ENCODE measurements at regions of chr16 and their contacts with region 1.

Region 1: GRCh38 chr16:87387942-87388817 is 4.0 kb upstream of the MAP1LC3B start:
- DNase-seq: peak; percentile 87 to 99
- H3K4me3 ChIP-seq: peak overlapping the region; percentile 45; the same call in 1 of the 2 replicates
- H3K27ac ChIP-seq: peak overlapping the region; percentile 83
- H3K4me1 ChIP-seq: peaks cover 34% of the 10 kb centered on the region
- H3K27me3 ChIP-seq: no peaks in the 10 kb centered on the region
- CTCF ChIP-seq: no peak

Region 2: DNA sequence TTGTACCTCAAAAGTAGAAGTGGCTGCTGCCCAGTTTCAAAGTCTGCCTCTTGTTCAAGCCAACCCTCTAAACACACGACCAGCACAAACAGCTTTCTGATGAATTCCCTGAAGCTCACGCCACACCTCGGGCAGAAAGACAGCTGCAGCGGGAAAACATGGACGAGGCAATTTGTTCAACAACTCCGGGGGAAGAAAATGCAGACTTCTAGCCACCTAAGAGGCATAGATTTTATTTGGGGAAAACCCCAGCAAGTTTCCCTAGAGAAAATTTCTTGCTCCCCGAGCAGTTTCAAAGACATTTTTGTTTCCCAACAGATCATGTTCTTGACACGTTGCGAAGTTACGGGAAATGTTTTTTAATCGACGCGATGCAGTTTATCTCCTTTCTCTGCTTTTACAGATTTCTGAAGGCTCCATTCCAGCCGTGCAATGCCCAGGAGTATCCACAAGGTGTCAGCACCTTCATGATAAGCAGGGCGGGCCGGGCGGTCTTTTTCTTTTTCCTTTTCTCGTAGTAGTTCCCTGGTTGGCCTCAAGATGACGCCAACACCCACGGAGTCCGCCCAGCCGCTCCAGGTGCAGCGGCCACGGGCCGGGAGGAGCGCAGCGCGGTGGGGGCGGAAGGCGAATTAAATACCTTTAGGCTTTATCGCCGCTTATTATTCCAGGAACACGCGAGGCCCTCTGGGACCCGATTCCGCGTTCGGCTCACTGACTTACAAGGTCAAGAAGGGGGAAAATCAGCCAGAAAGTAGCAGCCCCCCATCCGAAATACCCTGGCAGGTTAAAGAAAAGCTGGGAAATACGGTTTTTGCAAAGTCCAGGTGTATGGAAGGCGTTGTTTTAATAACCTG is 824.5 kb before region 1 on chr16:
- CTCF ChIA-PET with region 1: no interaction called
- POLR2A ChIA-PET with region 1: no interaction called
- intact Hi-C with region 1: loop called (anchors 5 kb)
- DNase-seq: peak; percentile 72 to 82
- H3K4me3 ChIP-seq: peak overlapping the region; percentile 19; the same call in 1 of the 2 replicates
- H3K27ac ChIP-seq: no peak overlapping the region
- H3K4me1 ChIP-seq: no peaks in the 10 kb centered on the region
- H3K27me3 ChIP-seq: peaks cover 42% of the 10 kb centered on the region
- CTCF ChIP-seq: peak; percentile 100

Region 3: GRCh38 chr16:87316923-87317749 is 71.0 kb before region 1 on chr16 and contains the start of gene C16orf95:
- CTCF ChIA-PET with region 1: interaction called, 5 read pairs
- POLR2A ChIA-PET with region 1: interaction called, 5 read pairs
- intact Hi-C with region 1: loop called (anchors 5 kb)
- DNase-seq: peak; percentile 85 to 96
- H3K4me3 ChIP-seq: peak within 1 kb of the TSS; percentile 99
- H3K27ac ChIP-seq: peak within 1 kb of the TSS; percentile 86
- H3K4me1 ChIP-seq: peaks cover 6% of the 10 kb centered on the region; the same call in 1 of the 2 replicates
- H3K27me3 ChIP-seq: no peaks in the 10 kb centered on the region
- CTCF ChIP-seq: peak; percentile 62
- total RNA-seq, gene C16orf95: 7.5 and 12.9 TPM in 2 replicates

Region 4: GRCh38 chr16:87471278-87472141 is 83.3 kb after region 1 on chr16:
- CTCF ChIA-PET with region 1: interaction called, 10 read pairs
- POLR2A ChIA-PET with region 1: no interaction called
- intact Hi-C with region 1: no loop called
- DNase-seq: no peak
- H3K4me3 ChIP-seq: no peak overlapping the region
- H3K27ac ChIP-seq: no peak overlapping the region
- H3K4me1 ChIP-seq: peaks cover 3% of the 10 kb centered on the region
- H3K27me3 ChIP-seq: no peaks in the 10 kb centered on the region
- CTCF ChIP-seq: no peak

Region 5: DNA sequence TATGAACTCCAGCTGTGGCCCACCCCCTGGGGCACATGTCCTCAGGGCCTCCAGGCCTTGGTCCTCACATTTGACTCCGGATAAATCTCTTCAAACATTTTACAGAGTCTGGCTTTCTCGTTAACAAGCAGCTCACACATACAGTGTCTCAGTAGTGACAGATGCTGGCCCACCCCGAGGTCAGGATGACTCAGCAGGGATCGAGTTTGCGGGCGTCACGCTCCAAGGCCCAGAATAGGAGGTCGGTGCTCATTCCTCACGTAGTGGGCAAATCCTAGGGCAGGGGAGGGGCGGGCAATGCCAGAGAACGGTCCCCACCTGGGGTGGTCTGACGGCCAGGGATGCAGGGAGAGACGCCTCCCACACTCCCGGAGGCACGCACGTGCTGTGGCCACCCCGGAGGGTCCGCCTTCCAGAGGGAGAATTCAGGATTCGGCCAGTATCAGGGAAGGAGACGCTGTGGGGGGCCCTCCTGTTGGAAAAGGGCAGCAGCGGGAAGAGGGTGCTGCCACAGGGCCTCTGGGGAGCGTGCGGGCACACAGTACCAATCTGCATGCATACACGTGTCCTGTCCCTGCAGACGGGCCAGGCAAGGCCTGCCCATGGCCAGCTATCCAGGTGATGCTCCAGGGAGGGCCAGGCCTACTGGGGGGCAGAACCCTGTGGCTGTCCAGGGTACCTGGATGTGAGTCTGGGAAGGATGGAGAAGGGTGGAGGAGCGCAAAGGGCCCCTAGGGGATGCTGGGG is 472.5 kb after region 1 on chr16:
- CTCF ChIA-PET with region 1: no interaction called
- POLR2A ChIA-PET with region 1: no interaction called
- intact Hi-C with region 1: loop called (anchors 5 kb)
- DNase-seq: peak; percentile 52 to 80
- H3K4me3 ChIP-seq: no peak overlapping the region
- H3K27ac ChIP-seq: no peak overlapping the region
- H3K4me1 ChIP-seq: peaks cover 47% of the 10 kb centered on the region
- H3K27me3 ChIP-seq: no peaks in the 10 kb centered on the region
- CTCF ChIP-seq: no peak